Activated CD4-positive, alpha-beta T cell treated with anti-CD3 and anti-CD28 coated beads for 36 hours (primary cell): ENCODE measurements at regions of chr1 and their contacts with region 1.

Region 1: DNA sequence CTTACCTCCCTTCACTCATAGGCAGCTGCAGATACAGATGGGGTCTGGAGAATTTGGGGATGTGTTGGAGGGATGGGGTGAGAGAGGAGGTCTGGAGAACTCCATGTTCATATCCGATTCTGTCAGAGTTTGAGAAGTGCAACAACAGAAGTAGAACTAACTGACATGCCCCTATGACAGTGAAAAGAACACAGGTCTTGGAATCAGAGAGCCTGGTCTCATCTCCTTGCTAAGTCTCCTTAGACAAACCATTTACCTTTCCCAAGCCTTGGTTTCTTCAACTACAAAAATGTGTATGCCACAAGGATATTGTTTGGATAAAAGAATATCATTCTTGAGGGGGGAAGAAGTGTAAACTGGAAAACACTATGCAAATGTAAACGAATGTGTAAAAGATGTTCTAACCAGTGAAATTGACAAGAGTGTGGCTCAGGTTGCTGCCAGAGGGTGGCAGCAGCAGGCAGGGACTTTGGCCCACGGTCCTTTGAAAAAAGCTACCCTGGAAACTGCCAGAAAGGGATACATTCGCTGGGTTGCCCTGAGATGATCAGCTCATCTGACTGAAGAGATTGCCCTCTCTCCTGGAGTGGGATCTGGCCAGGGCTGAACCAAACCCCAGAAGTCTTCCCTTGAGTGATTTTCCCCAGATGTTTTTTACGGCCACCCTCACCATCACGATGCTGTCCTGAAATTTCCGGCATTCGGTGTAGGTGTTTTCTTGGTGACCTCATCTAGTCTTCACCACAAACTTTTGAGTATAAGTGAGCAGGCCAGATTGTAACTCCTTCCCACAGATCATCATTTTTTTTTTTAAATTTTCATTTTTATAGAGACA is 17.0 kb upstream of the CD2 start:
- DNase-seq: peak; percentile 86
- ATAC-seq: peak; percentile 56
- H3K4me3 Mint-ChIP-seq: peak overlapping the region; percentile 71
- H3K27ac Mint-ChIP-seq: peak overlapping the region; percentile 98
- H3K4me1 Mint-ChIP-seq: peaks cover 57% of the 10 kb centered on the region
- H3K27me3 Mint-ChIP-seq: no peaks in the 10 kb centered on the region

Region 2: DNA sequence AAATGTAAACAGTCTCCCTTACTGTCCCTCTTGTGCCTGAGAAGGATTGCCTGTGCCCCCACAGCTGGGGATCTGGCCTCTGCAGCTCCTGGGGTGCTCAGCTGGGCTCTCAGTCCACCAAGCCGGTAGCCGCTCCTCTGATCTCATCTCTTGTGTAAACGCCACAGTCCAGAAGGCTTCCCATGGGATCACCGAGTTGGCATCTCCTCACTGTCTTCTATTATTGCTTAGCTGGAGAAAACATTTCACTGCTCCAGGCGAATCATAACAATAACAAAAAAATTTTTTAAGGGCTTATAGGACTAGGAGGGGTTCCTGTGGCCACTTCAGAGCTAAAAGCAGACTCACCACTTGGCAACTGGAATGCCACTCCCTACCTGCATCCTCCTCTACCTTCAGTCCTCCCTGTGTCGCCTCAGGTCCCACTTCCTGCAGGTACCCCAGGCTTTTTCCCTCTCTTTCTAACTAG is 288.4 kb before region 1 on chr1:
- CTCF ChIA-PET with region 1: no interaction called
- POLR2A ChIA-PET with region 1: no interaction called
- intact Hi-C with region 1: no loop called
- DNase-seq: no peak
- ATAC-seq: no peak
- H3K4me3 Mint-ChIP-seq: no peak overlapping the region
- H3K27ac Mint-ChIP-seq: no peak overlapping the region
- H3K4me1 Mint-ChIP-seq: no peaks in the 10 kb centered on the region
- H3K27me3 Mint-ChIP-seq: peaks cover 2% of the 10 kb centered on the region

Region 3: GRCh38 chr1:116605315-116605714 is 131.9 kb before region 1 on chr1:
- CTCF ChIA-PET with region 1: no interaction called
- POLR2A ChIA-PET with region 1: no interaction called
- intact Hi-C with region 1: no loop called
- DNase-seq: no peak
- ATAC-seq: no peak
- H3K4me3 Mint-ChIP-seq: no peak overlapping the region
- H3K27ac Mint-ChIP-seq: no peak overlapping the region
- H3K4me1 Mint-ChIP-seq: peaks cover 36% of the 10 kb centered on the region
- H3K27me3 Mint-ChIP-seq: no peaks in the 10 kb centered on the region

Region 4: DNA sequence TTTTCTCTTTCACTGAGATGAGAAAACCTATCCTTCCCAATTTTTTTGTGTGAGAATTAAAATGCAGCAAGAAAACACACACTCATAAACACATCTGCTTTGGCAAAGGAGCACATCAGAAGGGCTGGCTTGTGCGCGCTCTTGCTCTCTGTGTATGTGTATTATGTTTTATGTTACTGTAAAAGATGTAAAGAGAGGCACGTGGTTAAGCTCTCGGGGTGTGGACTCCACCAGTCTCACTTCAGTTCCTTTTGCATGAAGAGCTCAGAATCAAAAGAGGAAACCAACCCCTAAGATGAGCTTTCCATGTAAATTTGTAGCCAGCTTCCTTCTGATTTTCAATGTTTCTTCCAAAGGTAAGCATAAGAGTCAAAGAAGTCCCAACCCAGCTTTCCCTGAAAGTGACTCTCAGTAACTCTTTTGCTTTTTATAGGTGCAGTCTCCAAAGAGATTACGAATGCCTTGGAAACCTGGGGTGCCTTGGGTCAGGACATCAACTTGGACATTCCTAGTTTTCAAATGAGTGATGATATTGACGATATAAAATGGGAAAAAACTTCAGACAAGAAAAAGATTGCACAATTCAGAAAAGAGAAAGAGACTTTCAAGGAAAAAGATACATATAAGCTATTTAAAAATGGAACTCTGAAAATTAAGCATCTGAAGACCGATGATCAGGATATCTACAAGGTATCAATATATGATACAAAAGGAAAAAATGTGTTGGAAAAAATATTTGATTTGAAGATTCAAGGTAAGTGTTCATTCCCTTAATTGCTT is 17.2 kb after region 1 on chr1 and contains the start of gene CD2:
- CTCF ChIA-PET with region 1: interaction called, 66 read pairs
- POLR2A ChIA-PET with region 1: interaction called, 137 read pairs
- intact Hi-C with region 1: loop called (anchors 1 kb)
- DNase-seq: peak; percentile 80
- ATAC-seq: peak; percentile 80
- H3K4me3 Mint-ChIP-seq: peak within 1 kb of the TSS; percentile 93
- H3K27ac Mint-ChIP-seq: peak within 1 kb of the TSS; percentile 100
- H3K4me1 Mint-ChIP-seq: peaks cover 41% of the 10 kb centered on the region
- H3K27me3 Mint-ChIP-seq: no peaks in the 10 kb centered on the region
- total RNA-seq, gene CD2: 287 to 291 TPM

Region 5: GRCh38 chr1:116777831-116778830 is 40.9 kb after region 1 on chr1:
- CTCF ChIA-PET with region 1: interaction called, 213 read pairs
- POLR2A ChIA-PET with region 1: interaction called, 13 read pairs
- intact Hi-C with region 1: no loop called
- DNase-seq: no peak
- ATAC-seq: peak; percentile 61
- H3K4me3 Mint-ChIP-seq: peak overlapping the region; percentile 47
- H3K27ac Mint-ChIP-seq: peak overlapping the region; percentile 95
- H3K4me1 Mint-ChIP-seq: peaks cover 42% of the 10 kb centered on the region
- H3K27me3 Mint-ChIP-seq: no peaks in the 10 kb centered on the region

Region 6: DNA sequence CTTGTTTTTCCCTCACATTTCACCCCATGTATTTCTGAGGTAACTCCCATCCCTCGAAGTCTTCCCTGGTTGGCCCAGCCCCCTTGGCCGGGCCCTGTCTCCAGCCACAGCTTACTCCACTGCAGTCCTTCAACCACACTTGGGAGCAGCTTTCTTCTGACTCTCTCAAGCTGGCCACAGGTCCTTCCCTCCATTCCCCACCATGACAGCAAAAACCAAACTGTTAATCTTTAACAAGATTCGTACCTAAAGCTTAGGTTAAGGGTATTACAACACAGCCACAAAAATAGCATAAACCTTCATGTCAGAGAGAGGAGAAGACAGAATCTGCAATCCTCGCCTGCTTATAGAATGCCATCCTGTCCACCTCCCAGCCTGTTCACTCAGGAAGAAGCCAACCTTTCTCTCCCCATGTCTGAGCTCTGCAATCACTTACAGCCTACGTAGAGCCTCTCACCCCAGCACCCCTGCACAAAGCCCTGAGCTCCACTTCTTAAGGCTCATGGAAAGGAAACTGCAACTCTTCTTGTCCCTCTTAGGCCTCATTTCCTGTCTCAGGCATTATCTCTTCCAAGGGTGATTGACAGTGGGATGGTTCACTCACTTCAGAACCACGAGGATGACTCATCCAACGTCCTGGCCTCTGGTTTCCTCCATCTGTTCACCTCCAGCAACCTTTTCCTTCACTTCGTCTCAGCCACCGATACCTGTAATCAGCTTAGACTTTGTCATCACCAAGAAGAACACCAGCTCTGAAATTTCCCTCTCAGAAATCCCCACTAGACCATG is 89.8 kb after region 1 on chr1:
- CTCF ChIA-PET with region 1: interaction called, 27 read pairs
- POLR2A ChIA-PET with region 1: interaction called, 29 read pairs
- intact Hi-C with region 1: loop called (anchors 1 kb)
- DNase-seq: peak; percentile 87
- ATAC-seq: peak; percentile 90
- H3K4me3 Mint-ChIP-seq: peak overlapping the region; percentile 77
- H3K27ac Mint-ChIP-seq: peak overlapping the region; percentile 97
- H3K4me1 Mint-ChIP-seq: peaks cover 69% of the 10 kb centered on the region
- H3K27me3 Mint-ChIP-seq: no peaks in the 10 kb centered on the region

Region 7: GRCh38 chr1:116881879-116882520 is 144.8 kb after region 1 on chr1:
- CTCF ChIA-PET with region 1: interaction called, 17 read pairs
- POLR2A ChIA-PET with region 1: interaction called, 3 read pairs
- intact Hi-C with region 1: loop called (anchors 1 kb)
- DNase-seq: peak; percentile 72
- ATAC-seq: peak; percentile 77
- H3K4me3 Mint-ChIP-seq: no peak overlapping the region
- H3K27ac Mint-ChIP-seq: no peak overlapping the region
- H3K4me1 Mint-ChIP-seq: peaks cover 14% of the 10 kb centered on the region
- H3K27me3 Mint-ChIP-seq: no peaks in the 10 kb centered on the region

Region 8: DNA sequence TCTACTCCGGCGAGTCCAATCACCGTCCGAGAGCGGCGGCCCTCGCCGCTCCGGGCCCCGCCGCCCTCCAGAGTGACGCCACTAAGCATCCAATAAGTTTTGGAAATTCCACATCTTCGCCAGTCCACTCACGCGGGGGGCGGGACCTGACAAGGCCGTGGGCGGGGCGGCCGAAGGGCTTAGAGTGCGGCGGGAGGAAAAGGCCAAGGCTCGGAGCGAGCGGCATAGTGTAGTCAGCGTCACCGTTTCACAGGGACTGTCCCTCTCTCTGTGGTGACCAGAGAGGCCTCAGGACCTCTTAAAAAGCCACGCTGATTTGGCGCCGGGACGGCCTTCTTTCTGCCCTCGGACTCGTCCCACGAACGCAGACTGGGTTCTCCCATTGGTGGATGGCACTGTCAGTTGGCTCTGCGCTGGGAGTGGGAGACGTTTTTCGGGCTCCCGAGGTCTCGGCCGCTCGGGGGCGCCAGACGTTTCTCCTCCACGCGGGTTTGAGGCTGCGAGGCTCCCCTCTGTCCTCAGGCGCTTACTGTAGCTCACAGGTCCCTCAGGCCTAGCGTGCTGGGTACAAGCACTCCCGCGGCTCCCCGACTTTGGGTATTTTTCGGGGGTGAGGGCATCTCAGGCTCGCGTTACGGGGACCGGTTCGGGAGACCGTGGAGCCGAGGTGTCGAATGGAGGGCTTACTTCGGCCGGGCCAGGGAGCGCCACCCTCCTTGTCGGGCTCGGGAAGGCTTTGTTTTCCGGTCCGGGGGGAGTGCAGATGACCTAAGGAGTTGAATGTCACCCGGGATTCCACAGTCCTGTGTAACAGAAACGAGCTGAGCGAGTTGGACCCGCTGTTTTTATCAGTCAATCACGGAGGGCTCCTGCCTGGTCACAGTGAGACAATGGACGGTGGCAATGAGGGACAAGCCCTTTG is 384.8 kb after region 1 on chr1:
- CTCF ChIA-PET with region 1: interaction called, 4 read pairs
- POLR2A ChIA-PET with region 1: no interaction called
- intact Hi-C with region 1: loop called in 1 of 2 experiments (anchors 10 kb)
- DNase-seq: peak; percentile 89
- ATAC-seq: peak; percentile 92
- H3K4me3 Mint-ChIP-seq: peak overlapping the region; percentile 71
- H3K27ac Mint-ChIP-seq: no peak overlapping the region
- H3K4me1 Mint-ChIP-seq: peaks cover 6% of the 10 kb centered on the region
- H3K27me3 Mint-ChIP-seq: peaks cover 14% of the 10 kb centered on the region